B cell (primary cell): ENCODE measurements at regions of chr7 and their contacts with region 1.

Region 1: DNA sequence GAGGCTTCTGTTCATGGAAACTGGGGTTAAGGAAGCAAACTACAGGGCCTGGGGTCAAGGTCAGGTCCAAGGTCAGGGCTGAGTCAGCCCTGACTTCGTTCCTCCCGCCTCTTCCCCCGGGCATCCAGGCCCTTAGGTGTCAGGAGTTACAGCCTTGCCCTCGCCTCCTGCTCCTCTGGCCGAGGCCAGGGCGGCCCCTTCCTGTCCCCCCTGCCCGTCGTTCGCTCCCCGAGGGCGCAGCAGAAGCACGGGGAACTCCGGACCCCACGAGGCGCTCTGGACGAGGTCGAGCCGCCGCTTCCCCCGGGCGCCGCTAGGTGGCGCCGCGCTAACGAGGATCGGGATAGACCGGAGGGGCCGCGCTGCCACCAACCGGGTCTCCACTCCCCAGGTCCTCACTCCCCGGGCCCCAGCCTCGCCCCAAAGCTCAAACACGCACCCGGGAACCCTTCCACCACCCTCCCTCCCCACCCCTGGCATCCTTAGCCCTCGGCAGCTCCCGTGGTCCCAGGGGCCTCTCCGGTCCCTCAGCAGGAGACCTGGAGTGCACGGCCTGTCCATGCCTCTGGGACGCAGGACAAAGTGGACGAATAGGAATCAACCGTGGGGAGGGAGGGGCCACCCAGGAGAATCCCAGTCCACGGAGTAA is 59.2 kb upstream of the MYL10 start:
- DNase-seq: peak; percentile 87
- ATAC-seq: peak; percentile 91
- H3K4me3 ChIP-seq: peak overlapping the region in 1 of 5 experiments; percentile 15
- H3K4me3 Mint-ChIP-seq: no peak overlapping the region
- H3K27ac ChIP-seq: no peak overlapping the region
- H3K27ac Mint-ChIP-seq: no peak overlapping the region
- H3K4me1 ChIP-seq: peaks cover 3 to 7% of the 10 kb centered on the region in 2 donors
- H3K4me1 Mint-ChIP-seq: peaks cover 2% of the 10 kb centered on the region
- H3K27me3 ChIP-seq: peaks cover 0 to 12% (median 1%) of the 10 kb centered on the region in 4 experiments
- H3K27me3 Mint-ChIP-seq: peaks cover 5% of the 10 kb centered on the region
- CTCF ChIP-seq: peak; percentile 93

Region 2: DNA sequence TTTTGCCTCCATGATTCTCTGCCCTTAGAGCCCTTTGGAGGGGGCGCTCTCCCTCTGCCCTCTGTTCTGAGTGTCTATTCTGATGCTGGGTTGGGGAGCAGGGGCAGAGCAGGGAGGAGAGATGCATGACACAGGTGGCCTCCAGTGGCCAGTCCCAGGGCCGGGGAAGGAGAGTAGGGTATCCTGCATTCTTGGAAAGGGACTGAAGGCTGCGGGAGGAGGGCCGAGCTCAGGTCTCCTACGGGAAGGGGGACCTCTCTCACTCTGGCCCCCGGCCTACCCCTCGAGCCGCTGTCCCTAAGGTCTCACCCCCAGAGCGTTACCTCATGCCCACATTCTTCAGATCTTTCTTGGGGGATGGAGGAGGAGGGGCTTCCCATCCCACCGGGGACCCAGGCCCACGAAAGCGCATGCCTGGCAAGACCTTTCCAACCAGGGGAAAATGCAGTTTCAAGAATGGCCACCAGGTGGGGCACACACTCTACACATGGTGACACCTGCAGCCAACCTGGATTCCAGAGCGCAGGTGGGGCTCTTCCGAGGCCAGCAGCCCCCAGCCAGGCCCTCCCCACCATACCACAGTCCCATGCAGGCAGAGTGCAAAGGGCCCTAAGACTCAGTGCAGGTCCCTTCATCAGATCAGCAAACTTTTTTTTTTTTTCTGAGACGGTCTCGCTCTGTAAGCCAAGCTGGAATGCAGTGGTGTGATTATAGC is 145.6 kb before region 1 on chr7:
- CTCF ChIA-PET with region 1: interaction called, 5 read pairs
- POLR2A ChIA-PET with region 1: no interaction called
- intact Hi-C with region 1: loop called (anchors 5 kb)
- DNase-seq: peak; percentile 77
- ATAC-seq: peak; percentile 68
- H3K4me3 ChIP-seq: no peak overlapping the region
- H3K4me3 Mint-ChIP-seq: no peak overlapping the region
- H3K27ac ChIP-seq: no peak overlapping the region
- H3K27ac Mint-ChIP-seq: no peak overlapping the region
- H3K4me1 ChIP-seq: no peaks in the 10 kb centered on the region
- H3K4me1 Mint-ChIP-seq: no peaks in the 10 kb centered on the region
- H3K27me3 ChIP-seq: peaks cover 0 to 10% (median 1%) of the 10 kb centered on the region in 4 experiments
- H3K27me3 Mint-ChIP-seq: peaks cover 5% of the 10 kb centered on the region
- CTCF ChIP-seq: peak; percentile 88

Region 3: DNA sequence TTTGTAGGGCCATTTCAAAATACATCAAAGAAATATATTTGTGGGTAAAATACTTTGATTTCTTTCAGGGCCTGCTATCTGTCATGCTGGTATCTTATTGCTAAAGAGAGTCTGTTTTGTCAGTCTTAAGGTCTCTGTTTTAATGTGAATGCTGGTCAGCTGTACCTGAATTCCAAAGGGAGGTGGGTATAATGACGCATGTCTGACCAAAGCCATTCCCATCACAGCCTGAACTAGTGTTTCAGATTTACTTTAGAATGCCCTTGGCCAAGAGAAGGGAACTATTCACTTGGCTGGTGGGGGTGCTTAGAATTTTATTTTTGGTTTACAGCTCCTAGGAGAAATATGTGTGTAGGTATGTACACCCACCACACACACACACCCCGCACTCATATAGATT is 28.6 kb before region 1 on chr7:
- CTCF ChIA-PET with region 1: no interaction called
- POLR2A ChIA-PET with region 1: no interaction called
- intact Hi-C with region 1: no loop called
- DNase-seq: no peak
- ATAC-seq: no peak
- H3K4me3 ChIP-seq: no peak overlapping the region
- H3K4me3 Mint-ChIP-seq: no peak overlapping the region
- H3K27ac ChIP-seq: no peak overlapping the region
- H3K27ac Mint-ChIP-seq: no peak overlapping the region
- H3K4me1 ChIP-seq: no peaks in the 10 kb centered on the region
- H3K4me1 Mint-ChIP-seq: no peaks in the 10 kb centered on the region
- H3K27me3 ChIP-seq: peaks cover 0 to 4% (median 0%) of the 10 kb centered on the region in 4 experiments
- H3K27me3 Mint-ChIP-seq: peaks cover 21% of the 10 kb centered on the region
- CTCF ChIP-seq: no peak

Region 4: DNA sequence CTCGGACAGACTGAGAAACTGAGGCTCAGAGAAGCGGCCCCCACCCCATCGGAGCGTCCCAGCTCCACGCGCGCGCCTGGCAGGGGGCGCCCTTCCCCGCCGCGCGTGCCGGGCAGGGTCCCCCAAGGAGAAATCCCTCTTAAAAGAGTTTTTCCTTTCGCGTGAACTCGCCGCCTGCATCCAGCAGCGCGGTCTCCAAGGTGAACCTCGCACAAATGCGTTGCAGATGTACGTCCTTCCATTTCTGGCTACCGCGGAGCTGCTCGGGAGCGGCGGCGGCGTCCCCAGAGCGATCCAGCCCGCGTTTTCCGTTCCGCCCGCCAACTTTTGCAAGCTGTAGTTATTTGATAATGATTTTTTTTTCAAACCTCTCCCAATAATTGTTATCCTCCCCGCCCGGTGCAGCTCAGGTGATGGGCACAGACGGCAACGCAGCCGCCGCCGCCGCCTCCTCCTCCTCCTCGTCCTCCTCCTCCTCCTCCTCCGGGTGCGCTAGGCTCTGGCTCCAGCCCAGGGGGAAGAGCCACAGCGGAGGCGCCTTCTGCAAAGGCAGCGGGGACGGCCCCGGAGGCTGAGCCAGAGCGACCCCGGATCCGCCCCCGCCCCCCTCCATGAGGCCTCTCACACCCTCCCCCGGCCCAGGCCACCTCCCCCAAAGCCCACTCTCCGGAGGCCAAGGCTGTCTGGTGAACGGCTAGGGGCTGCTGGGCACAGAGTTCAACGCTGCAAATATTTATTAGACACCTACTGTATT is 55.1 kb after region 1 on chr7:
- CTCF ChIA-PET with region 1: interaction called, 11 read pairs
- POLR2A ChIA-PET with region 1: no interaction called
- intact Hi-C with region 1: loop called (anchors 5 kb)
- DNase-seq: peak; percentile 78
- ATAC-seq: peak; percentile 44
- H3K4me3 ChIP-seq: peak overlapping the region; percentile 1 to 62 (median 57)
- H3K4me3 Mint-ChIP-seq: peak overlapping the region; percentile 83
- H3K27ac ChIP-seq: no peak overlapping the region
- H3K27ac Mint-ChIP-seq: peak overlapping the region; percentile 32
- H3K4me1 ChIP-seq: peaks cover 42 to 63% of the 10 kb centered on the region in 2 donors
- H3K4me1 Mint-ChIP-seq: peaks cover 51% of the 10 kb centered on the region
- H3K27me3 ChIP-seq: peaks cover 0 to 8% (median 0%) of the 10 kb centered on the region in 4 experiments
- H3K27me3 Mint-ChIP-seq: no peaks in the 10 kb centered on the region
- CTCF ChIP-seq: peak; percentile 67

Region 5: DNA sequence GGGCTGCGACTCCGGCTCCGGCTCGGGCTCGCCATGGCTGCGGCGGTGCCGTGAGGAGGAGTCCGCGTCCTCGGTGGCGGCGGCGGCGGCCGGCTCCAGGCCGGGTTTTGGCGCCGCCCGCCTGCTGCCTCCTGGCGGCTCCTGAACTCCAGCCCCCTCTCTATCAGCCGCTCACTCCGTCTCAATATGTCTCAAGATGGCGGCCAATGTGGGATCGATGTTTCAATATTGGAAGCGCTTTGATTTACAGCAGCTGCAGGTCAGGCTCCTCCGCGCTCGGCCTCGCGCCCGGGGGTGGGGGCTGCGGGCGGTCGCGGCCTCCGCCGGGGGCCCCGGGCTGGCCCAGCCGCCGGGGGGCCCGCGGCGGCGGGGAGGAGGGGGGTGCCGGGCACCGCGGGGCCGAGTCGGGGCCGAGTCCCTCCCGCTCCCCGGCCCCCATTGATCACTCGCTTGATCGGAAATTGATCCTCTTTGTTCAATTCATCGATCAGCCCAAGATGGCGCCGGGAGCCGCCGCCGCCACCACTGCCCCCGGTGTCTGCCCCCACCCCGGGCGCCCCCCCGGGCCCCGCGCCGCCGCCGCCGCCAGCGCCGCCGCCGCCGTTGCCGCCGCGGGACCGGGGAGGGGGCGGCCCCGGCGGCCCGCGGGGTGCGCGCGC is 127.7 kb after region 1 on chr7:
- CTCF ChIA-PET with region 1: interaction called, 14 read pairs
- POLR2A ChIA-PET with region 1: no interaction called
- intact Hi-C with region 1: loop called (anchors 1 kb)
- DNase-seq: peak; percentile 87
- ATAC-seq: peak; percentile 73
- H3K4me3 ChIP-seq: peak overlapping the region; percentile 49 to 73 (median 61)
- H3K4me3 Mint-ChIP-seq: peak overlapping the region; percentile 88
- H3K27ac ChIP-seq: peak overlapping the region in 1 of 2 donors; percentile 18
- H3K27ac Mint-ChIP-seq: peak overlapping the region; percentile 89
- H3K4me1 ChIP-seq: peaks cover 7 to 16% of the 10 kb centered on the region in 2 donors
- H3K4me1 Mint-ChIP-seq: peaks cover 28% of the 10 kb centered on the region
- H3K27me3 ChIP-seq: no peaks in the 10 kb centered on the region
- H3K27me3 Mint-ChIP-seq: no peaks in the 10 kb centered on the region
- CTCF ChIP-seq: no peak

Region 6: DNA sequence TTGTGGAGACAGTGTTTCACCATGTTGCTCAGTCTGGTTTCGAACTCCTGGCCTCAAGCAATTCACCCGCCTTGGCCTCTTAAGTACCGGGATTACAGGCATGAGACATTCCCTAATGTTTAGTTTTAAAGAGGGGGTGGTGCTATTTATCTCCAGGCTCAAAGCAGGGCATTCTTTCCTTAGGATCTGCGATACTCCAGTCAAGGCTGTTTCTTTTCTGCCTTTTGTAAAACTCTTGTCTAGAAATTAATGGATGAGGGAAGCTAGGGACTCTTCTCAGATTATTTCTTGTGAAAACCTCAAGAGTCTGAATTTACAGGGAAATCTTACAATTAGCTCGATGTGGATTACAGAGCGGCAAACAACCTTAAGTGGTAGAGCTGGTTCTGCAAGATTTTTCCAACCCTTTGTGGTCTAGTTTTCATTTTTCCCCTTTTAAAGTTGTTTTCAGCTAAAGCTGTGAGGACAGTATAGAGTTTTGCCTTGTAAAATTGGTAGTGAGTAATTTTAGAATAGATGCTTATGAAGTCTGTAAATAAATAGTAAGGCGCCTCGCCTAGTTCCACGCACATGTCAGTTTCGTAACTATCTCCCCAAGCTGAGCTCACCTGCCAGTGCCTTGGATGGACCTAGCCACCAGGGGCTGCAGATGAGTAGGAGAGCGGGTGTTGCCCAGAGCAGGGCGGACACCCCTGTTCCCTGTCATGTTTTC is 182.2 kb after region 1 on chr7:
- CTCF ChIA-PET with region 1: no interaction called
- POLR2A ChIA-PET with region 1: no interaction called
- intact Hi-C with region 1: no loop called
- DNase-seq: no peak
- ATAC-seq: no peak
- H3K4me3 ChIP-seq: no peak overlapping the region
- H3K4me3 Mint-ChIP-seq: no peak overlapping the region
- H3K27ac ChIP-seq: no peak overlapping the region
- H3K27ac Mint-ChIP-seq: no peak overlapping the region
- H3K4me1 ChIP-seq: peaks cover 0 to 9% of the 10 kb centered on the region in 2 donors
- H3K4me1 Mint-ChIP-seq: peaks cover 39% of the 10 kb centered on the region
- H3K27me3 ChIP-seq: no peaks in the 10 kb centered on the region
- H3K27me3 Mint-ChIP-seq: no peaks in the 10 kb centered on the region
- CTCF ChIP-seq: no peak

Region 7: GRCh38 chr7:102272075-102272917 is 584.0 kb after region 1 on chr7:
- CTCF ChIA-PET with region 1: no interaction called
- POLR2A ChIA-PET with region 1: no interaction called
- intact Hi-C with region 1: loop called (anchors 2 kb)
- DNase-seq: peak; percentile 79
- ATAC-seq: peak; percentile 87
- H3K4me3 ChIP-seq: no peak overlapping the region
- H3K4me3 Mint-ChIP-seq: no peak overlapping the region
- H3K27ac ChIP-seq: no peak overlapping the region
- H3K27ac Mint-ChIP-seq: no peak overlapping the region
- H3K4me1 ChIP-seq: peaks cover 0 to 3% of the 10 kb centered on the region in 2 donors
- H3K4me1 Mint-ChIP-seq: peaks cover 2% of the 10 kb centered on the region
- H3K27me3 ChIP-seq: no peaks in the 10 kb centered on the region
- H3K27me3 Mint-ChIP-seq: no peaks in the 10 kb centered on the region
- CTCF ChIP-seq: peak; percentile 95